AG04450 (cell line): ENCODE measurements at regions of chr2 and their contacts with region 1.

Region 1: GRCh38 chr2:233053928-233054784 is 6.0 kb upstream of the INPP5D start:
- DNase-seq: no peak
- H3K4me3 ChIP-seq: no peak overlapping the region
- H3K27ac ChIP-seq: no peak overlapping the region
- H3K27me3 ChIP-seq: peaks cover 6% of the 10 kb centered on the region
- CTCF ChIP-seq: peak; percentile 90

Region 2: DNA sequence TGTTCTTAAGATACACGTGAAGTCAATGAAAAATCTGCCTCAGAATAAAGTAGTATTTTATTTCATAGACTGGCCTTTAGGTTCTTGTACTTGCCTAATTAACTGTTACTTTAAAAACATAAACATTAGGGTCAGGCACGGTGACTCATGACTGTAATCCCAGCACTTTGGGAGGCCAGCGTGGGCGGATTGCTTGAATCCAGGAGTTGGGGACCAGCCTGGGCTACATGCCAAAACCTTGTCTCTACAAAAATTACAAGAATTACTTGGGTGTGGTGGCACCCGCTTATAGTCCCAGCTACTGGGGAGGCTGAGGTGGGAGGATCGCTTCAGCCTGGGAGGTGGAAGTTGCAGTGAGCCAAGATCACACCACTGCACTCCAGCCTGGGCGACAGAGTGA is 200.1 kb before region 1 on chr2:
- CTCF ChIA-PET with region 1: interaction called, 68 read pairs
- POLR2A ChIA-PET with region 1: no interaction called
- DNase-seq: peak; percentile 60
- H3K4me3 ChIP-seq: no peak overlapping the region
- H3K27ac ChIP-seq: no peak overlapping the region
- H3K27me3 ChIP-seq: no peaks in the 10 kb centered on the region
- CTCF ChIP-seq: no peak

Region 3: DNA sequence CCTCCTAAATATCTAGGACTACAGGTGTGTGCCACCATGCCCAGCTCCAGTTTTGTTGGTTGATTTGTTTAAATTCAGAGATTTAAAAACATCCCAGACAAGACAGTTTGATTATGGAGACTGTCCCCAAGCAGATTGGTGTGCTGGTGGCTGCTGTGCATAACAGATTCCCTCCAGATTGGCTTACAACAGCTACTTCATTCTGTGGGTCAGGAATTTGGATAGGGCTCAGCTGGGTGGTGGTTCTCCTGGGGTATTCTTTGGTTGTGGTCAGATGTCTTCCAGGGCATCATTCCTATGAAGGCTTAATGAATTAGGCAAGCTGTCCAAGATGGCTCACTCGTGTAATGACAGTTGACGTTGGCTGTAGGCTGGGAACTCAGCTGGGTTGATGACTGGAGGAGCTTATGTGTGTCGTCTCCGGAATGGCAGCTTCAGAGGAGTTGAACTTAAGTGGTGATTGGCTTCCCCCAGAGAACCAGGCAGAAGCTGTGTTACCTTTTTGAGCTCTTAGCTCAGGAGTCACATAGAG is 194.7 kb before region 1 on chr2:
- CTCF ChIA-PET with region 1: interaction called, 68 read pairs
- POLR2A ChIA-PET with region 1: no interaction called
- DNase-seq: no peak
- H3K4me3 ChIP-seq: no peak overlapping the region
- H3K27ac ChIP-seq: no peak overlapping the region
- H3K27me3 ChIP-seq: no peaks in the 10 kb centered on the region
- CTCF ChIP-seq: no peak

Region 4: GRCh38 chr2:233041722-233042323 is 12.3 kb before region 1 on chr2:
- CTCF ChIA-PET with region 1: interaction called, 26 read pairs
- POLR2A ChIA-PET with region 1: no interaction called
- DNase-seq: no peak
- H3K4me3 ChIP-seq: no peak overlapping the region
- H3K27ac ChIP-seq: no peak overlapping the region
- H3K27me3 ChIP-seq: peaks cover 37% of the 10 kb centered on the region
- CTCF ChIP-seq: no peak

Region 5: GRCh38 chr2:233075966-233076339 is 21.8 kb after region 1 on chr2:
- CTCF ChIA-PET with region 1: interaction called, 15 read pairs
- POLR2A ChIA-PET with region 1: no interaction called
- DNase-seq: no peak
- H3K4me3 ChIP-seq: no peak overlapping the region
- H3K27ac ChIP-seq: no peak overlapping the region
- H3K27me3 ChIP-seq: peaks cover 25% of the 10 kb centered on the region
- CTCF ChIP-seq: no peak

Region 6: GRCh38 chr2:233251306-233252116 is 197.4 kb after region 1 on chr2 and contains the start of gene ATG16L1:
- CTCF ChIA-PET with region 1: interaction called, 13 read pairs
- POLR2A ChIA-PET with region 1: no interaction called
- DNase-seq: peak; percentile 93
- H3K4me3 ChIP-seq: peak within 1 kb of the TSS; percentile 97
- H3K27ac ChIP-seq: peak within 1 kb of the TSS; percentile 63
- H3K27me3 ChIP-seq: no peaks in the 10 kb centered on the region
- CTCF ChIP-seq: peak; percentile 97
- polyA plus RNA-seq, gene ATG16L1: 28.3 and 32.8 TPM in 2 replicates